ENCODE measurements at regions of chr11 and their contacts with region 1.

Region 1: GRCh38 chr11:72573072-72573854 is 101.0 kb downstream of the PDE2A start:
- DNase-seq: peak in 12 of 42 donors; percentile 8 to 64 (median 42)

Region 2: GRCh38 chr11:72471005-72471898 is 102.0 kb before region 1 on chr11:
- intact Hi-C with region 1: loop called (anchors 10 kb)
- DNase-seq: peak; percentile 53 to 94 (median 78)